Tibial artery (tissue), 4 donors: ENCODE measurements at regions of chr17 and their contacts with region 1.

Region 1: DNA sequence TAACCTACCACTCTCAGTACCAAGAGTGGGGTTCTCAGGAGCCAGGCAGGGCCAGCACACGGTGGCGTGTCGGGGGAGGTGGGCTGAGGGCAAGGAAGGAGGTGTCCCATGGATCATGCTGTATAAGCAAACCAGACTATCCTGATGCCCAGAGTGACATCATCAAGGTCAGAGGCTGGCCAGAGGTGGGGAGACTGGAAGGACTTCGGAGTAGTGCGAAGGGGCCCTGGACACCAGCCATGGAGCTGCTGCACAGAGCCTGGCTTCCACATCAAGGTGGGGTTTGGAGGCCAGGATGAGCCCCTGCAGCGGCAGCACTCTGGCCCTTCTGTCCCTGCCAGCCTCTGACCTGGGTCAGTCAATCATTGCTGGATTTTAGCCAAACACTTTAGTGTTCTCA is 34.9 kb downstream of the MED13 start:
- DNase-seq: no peak
- H3K4me3 ChIP-seq: no peak overlapping the region
- H3K27ac ChIP-seq: no peak overlapping the region
- H3K4me1 ChIP-seq: no peaks in the 10 kb centered on the region
- H3K27me3 ChIP-seq: no peaks in the 10 kb centered on the region
- CTCF ChIP-seq: no peak

Region 2: DNA sequence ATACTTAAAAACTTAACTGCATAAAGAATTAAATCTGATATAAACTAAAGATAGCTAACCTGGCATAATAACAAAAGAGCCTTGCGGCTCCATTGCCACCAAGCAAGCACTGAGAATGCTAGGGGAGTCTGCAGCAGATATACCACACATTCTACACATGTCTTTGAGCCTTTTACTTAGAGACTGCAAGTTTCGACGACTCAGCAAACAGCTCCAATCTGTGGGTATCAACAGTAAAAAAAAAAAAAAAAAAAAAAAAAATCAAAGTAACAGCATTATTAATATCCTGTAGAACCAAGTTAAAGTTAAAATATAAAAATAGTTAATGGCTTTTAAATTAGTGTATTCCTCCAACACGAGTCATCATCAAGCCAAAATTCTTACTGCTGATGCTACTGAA is 74.6 kb before region 1 on chr17:
- intact Hi-C with region 1: loop called (anchors 10 kb)
- DNase-seq: no peak
- H3K4me3 ChIP-seq: no peak overlapping the region
- H3K27ac ChIP-seq: no peak overlapping the region
- H3K4me1 ChIP-seq: no peaks in the 10 kb centered on the region
- H3K27me3 ChIP-seq: no peaks in the 10 kb centered on the region
- CTCF ChIP-seq: no peak

Region 3: DNA sequence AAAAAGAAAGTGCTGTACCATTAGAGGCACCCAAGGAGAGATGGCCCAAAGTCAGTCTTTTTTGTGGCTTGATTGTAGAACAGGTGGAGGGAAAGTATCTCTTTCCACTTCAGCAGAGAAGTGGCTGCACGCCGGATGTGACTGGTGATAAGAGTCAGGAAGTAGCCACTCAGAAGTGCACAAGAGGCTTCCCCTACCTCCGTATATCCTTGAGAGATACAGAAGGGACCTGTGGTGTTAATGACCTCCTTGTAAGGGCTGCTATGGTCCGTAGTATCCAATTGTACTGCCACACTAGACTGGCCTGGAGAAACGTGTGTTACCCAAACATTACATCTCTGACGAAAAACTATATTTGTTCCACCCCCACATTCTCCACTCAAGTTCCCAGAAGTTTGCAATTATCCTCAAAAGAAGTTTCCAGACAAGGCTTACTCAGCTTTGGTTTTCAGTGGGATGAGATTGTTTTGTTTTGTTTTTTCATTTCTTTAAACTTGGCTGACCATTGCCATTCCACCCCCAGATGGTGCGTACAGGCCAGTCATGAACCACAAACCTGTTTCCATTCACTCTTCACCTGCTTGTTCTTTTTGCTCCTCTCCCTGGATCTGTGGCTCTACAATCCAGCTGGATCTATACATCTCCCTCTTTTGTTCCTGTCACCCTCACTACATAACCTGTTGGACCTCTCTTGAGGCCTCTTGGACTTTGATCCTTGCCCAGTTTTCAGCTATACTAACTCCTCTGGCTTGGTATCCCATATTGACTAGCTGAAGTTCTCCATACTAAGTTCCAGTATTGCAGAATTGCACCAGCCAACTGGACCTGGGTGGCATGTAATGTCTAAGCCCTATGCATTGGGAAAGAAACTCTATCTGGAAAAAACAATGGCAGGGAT is 55.6 kb after region 1 on chr17:
- intact Hi-C with region 1: no loop called
- DNase-seq: no peak
- H3K4me3 ChIP-seq: no peak overlapping the region
- H3K27ac ChIP-seq: no peak overlapping the region
- H3K4me1 ChIP-seq: no peaks in the 10 kb centered on the region
- H3K27me3 ChIP-seq: peaks cover 0 to 4% of the 10 kb centered on the region in 2 donors
- CTCF ChIP-seq: no peak